Sigmoid colon (tissue), 7 donors: ENCODE measurements at regions of chr7 and their contacts with region 1.

Region 1: GRCh38 chr7:786472-787255 is 45.6 kb upstream of the SUN1 start:
- DNase-seq: peak; percentile 90
- H3K4me3 ChIP-seq: no peak overlapping the region
- H3K27ac ChIP-seq: peak overlapping the region in 1 of 4 donors; percentile 22
- H3K4me1 ChIP-seq: peaks cover 0 to 28% (median 13%) of the 10 kb centered on the region in 4 donors
- H3K27me3 ChIP-seq: no peaks in the 10 kb centered on the region
- CTCF ChIP-seq: peak; percentile 90 to 93 (median 92)
- EP300 ChIP-seq: no peak
- POLR2A ChIP-seq: no peak

Region 2: GRCh38 chr7:561631-562373 is 224.9 kb before region 1 on chr7:
- intact Hi-C with region 1: no loop called
- DNase-seq: no peak
- H3K4me3 ChIP-seq: no peak overlapping the region
- H3K27ac ChIP-seq: no peak overlapping the region
- H3K4me1 ChIP-seq: no peaks in the 10 kb centered on the region
- H3K27me3 ChIP-seq: no peaks in the 10 kb centered on the region
- CTCF ChIP-seq: no peak
- EP300 ChIP-seq: no peak
- POLR2A ChIP-seq: no peak

Region 3: GRCh38 chr7:774161-775109 is 12.2 kb before region 1 on chr7:
- intact Hi-C with region 1: no loop called
- DNase-seq: no peak
- H3K4me3 ChIP-seq: no peak overlapping the region
- H3K27ac ChIP-seq: no peak overlapping the region
- H3K4me1 ChIP-seq: peaks cover 4 to 40% (median 38%) of the 10 kb centered on the region in 4 donors
- H3K27me3 ChIP-seq: no peaks in the 10 kb centered on the region
- CTCF ChIP-seq: peak; percentile 87 to 98 (median 91)
- EP300 ChIP-seq: no peak
- POLR2A ChIP-seq: no peak

Region 4: DNA sequence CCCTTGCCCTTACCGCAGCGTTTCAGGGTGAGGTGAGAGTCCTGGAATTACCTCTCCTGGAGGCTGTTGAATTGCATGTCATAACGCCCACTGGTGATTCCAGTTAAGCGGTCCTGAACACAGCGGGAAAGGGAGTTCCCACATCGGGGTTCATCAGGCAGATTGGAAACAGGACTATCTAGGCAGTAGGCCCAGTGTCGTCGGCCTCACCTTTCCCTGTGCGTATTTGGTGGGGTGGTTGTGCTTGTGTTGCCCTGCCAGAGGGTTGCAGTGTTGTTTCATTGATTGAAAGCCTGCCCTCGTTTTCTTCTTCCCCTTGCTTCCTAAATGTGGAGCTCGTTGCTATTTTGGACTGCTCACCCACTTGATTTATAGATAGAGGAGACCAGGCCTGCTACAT is 35.0 kb after region 1 on chr7:
- intact Hi-C with region 1: loop called (anchors 5 kb)
- DNase-seq: peak; percentile 69
- H3K4me3 ChIP-seq: peak overlapping the region in 1 of 4 donors; percentile 2
- H3K27ac ChIP-seq: peak overlapping the region; percentile 65 to 92 (median 76)
- H3K4me1 ChIP-seq: peaks cover 0 to 92% (median 74%) of the 10 kb centered on the region in 4 donors
- H3K27me3 ChIP-seq: no peaks in the 10 kb centered on the region
- CTCF ChIP-seq: no peak
- EP300 ChIP-seq: peak in 1 of 4 donors; percentile 46
- POLR2A ChIP-seq: no peak